Activated naive CD8-positive, alpha-beta T cell treated with anti-CD3 and anti-CD28 coated beads, Interleukin-2, amount 10 ng/mL, durations not matched to agents 7 days and 5 days (primary cell): ENCODE measurements at regions of chr19 and their contacts with region 1.

Region 1: GRCh38 chr19:23395041-23395721 is at the start of gene ZNF91:
- DNase-seq: peak; percentile 86
- ATAC-seq: peak; percentile 97
- H3K4me3 Mint-ChIP-seq: peak within 1 kb of the TSS; percentile 97
- H3K27ac Mint-ChIP-seq: peak within 1 kb of the TSS; percentile 96
- H3K4me1 Mint-ChIP-seq: peaks cover 8% of the 10 kb centered on the region
- H3K27me3 Mint-ChIP-seq: no peaks in the 10 kb centered on the region
- total RNA-seq, gene ZNF91: 56.8 to 56.9 TPM

Region 2: DNA sequence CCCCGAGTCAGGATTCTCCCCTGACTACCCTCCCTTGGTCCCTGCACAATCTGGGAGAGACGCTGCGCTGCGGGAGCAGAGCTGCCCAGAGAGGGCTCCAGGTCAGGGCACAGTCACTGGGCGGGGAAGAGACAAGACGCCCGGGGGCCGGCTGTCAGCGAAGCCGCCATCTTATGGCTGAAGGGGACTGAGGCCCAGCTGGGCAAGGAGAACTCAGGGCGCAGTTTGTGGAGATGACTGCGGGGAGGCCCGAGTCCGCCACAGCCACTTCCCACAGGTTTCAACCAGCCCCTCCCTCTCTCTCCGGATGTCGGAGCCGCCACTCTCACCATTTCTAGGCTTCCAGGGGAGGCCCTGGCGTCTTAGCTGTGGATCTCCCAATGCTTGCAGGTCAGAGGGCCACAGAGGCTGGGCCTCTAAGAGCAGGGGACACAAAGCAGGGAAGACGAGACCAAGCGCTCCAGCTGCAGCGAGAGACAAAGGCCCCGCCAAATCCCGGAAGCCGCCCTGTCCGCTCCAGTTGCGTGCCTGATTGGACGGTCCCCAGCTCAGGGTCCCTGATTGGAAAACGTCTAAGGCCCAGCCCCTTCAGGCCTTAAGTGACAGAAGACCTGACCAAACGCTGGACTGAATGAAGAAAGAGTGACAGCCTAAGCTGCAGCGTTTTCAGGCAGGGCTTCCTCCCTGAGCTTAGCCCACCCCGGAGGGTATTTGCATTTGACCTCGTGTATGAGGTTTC is 145.1 kb before region 1 on chr19 and contains the start of gene ZNF724:
- POLR2A ChIA-PET with region 1: interaction called, 22 read pairs
- DNase-seq: peak; percentile 85
- ATAC-seq: peak; percentile 99
- H3K4me3 Mint-ChIP-seq: peak within 1 kb of the TSS; percentile 91
- H3K27ac Mint-ChIP-seq: peak within 1 kb of the TSS; percentile 95
- H3K4me1 Mint-ChIP-seq: peaks cover 10% of the 10 kb centered on the region
- H3K27me3 Mint-ChIP-seq: no peaks in the 10 kb centered on the region
- total RNA-seq, gene ZNF724: 13.6 to 13.8 TPM

Region 3: DNA sequence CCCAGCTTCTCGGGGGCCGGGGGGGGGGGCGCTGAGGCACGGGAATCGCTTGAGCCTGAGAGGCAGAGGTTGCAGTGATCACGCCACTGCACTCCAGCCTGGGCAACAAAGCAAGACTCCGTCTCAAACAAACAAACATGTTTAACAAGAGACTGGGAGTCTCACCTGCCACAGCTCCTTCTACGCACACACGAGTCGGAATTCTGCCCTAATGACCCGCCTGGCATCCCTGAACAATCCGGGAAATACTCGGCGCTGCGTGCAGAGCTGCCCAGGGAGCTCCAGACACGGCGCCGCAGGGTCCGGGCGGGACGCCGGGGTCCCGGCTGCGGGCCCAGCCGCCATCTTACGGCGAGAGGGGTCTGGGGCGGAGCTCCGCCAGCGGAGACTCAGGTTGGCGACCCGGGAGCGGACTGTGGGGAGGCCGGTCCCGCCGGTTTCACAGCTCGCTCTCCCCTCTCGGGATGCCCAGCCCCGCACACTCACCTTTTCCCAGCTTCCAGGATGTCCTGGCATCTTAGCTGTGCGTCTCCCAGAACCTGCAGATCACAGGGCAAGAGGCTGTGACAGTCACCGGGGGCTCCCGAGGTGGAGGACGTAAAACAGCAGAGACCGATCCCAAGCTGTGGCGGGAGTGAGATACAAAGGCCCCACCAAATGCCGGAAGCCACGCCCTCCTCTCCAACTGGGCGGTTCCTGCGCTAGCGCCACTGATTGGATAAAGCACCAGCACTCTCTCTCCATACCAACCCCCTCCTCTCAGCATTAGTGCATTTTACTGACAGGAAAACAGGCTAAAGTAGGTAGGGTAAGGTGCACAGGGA is 121.4 kb before region 1 on chr19:
- POLR2A ChIA-PET with region 1: interaction called, 30 read pairs
- DNase-seq: peak; percentile 91
- ATAC-seq: peak; percentile 97
- H3K4me3 Mint-ChIP-seq: peak overlapping the region; percentile 94
- H3K27ac Mint-ChIP-seq: peak overlapping the region; percentile 97
- H3K4me1 Mint-ChIP-seq: peaks cover 17% of the 10 kb centered on the region
- H3K27me3 Mint-ChIP-seq: no peaks in the 10 kb centered on the region

Region 4: GRCh38 chr19:23415561-23416191 is 20.5 kb after region 1 on chr19:
- POLR2A ChIA-PET with region 1: interaction called, 15 read pairs
- DNase-seq: peak; percentile 35
- ATAC-seq: no peak
- H3K4me3 Mint-ChIP-seq: peak overlapping the region; percentile 61
- H3K27ac Mint-ChIP-seq: no peak overlapping the region
- H3K4me1 Mint-ChIP-seq: peaks cover 2% of the 10 kb centered on the region
- H3K27me3 Mint-ChIP-seq: peaks cover 13% of the 10 kb centered on the region

Region 5: DNA sequence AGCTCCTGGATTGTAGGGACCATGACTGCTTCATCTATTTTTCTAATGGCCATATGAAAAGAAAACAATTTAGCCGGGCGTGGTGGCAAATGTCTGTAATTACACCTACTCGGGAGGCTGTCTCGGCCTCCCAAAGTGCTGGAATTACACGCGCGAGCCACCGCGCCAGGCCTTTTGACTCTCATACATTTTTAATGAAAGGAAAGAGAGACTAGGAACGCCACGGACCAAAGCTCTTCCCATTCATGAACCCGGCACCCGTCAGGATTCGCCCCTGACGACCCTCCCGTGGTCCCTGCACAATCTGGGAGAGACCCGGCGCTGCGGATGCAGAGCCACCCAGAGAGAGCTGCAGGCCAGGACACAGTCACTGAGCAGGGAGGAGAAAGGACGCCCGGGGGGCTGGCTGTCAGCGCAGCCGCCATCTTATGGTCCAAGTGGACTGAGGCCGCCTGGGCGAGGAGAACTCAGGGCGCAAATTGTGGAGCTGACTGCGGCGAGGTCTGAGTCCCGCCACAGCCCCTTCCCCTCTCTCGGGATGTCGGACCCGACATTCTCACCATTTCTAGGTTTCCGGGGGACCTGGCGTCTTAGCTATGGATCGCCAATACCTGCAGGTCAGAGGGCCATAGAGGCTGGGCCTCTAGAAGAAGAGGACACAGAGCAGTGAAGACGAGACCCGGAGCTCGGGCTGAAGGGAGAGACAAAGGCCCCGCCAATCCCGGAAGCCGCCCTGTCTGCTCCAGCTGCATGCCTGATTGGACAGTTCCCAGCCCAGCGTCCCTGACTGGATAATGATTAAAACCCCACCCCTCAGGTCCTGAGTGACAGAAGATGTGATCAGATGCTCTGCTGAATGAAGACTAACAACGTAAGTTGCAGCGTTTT is 363.2 kb after region 1 on chr19 and contains the start of gene ZNF681:
- POLR2A ChIA-PET with region 1: interaction called, 13 read pairs
- DNase-seq: peak; percentile 80
- ATAC-seq: peak; percentile 92
- H3K4me3 Mint-ChIP-seq: peak within 1 kb of the TSS; percentile 90
- H3K27ac Mint-ChIP-seq: peak within 1 kb of the TSS; percentile 93
- H3K4me1 Mint-ChIP-seq: peaks cover 15% of the 10 kb centered on the region
- H3K27me3 Mint-ChIP-seq: no peaks in the 10 kb centered on the region
- total RNA-seq, gene ZNF681: 5.8 to 6.0 TPM

Region 6: GRCh38 chr19:23914402-23915301 is 519.5 kb after region 1 on chr19 and contains the start of gene ZNF726:
- POLR2A ChIA-PET with region 1: interaction called, 13 read pairs
- DNase-seq: peak; percentile 82
- ATAC-seq: peak; percentile 98
- H3K4me3 Mint-ChIP-seq: peak within 1 kb of the TSS; percentile 98
- H3K27ac Mint-ChIP-seq: peak within 1 kb of the TSS; percentile 99
- H3K4me1 Mint-ChIP-seq: peaks cover 8% of the 10 kb centered on the region
- H3K27me3 Mint-ChIP-seq: no peaks in the 10 kb centered on the region
- total RNA-seq, gene ZNF726: 14.4 to 20.3 TPM